ENCODE measurements at regions of chr13 and their contacts with region 1.

Region 1: DNA sequence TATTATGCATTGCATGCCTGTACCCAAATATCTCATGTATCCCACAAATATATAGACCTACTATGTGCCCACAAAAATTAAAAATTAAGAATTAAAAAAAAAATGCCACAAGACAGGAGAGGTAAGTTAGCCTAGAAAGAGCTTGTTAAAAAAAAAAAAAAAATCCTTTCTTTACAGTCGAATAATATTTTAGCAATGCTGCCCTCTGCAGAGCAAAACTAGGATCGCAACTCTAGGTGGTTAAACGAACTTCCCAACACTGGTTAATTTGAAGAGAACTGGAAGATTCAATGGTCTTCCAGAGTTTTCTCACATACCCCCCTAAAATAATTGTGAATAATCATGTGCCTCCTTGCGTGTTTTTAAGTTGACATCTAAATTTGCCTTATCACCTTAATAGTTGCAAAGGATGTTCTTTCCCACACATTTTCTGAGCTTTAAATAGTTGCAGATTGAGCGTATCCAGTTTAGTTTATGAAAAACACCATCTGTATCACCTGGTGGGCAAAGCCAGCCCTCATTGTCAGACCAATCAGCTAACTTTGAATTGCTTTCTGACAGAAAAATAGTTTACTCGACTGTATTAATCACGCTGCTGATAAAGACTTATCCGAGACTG is 47.4 kb upstream of the RCBTB2 start:
- DNase-seq: peak; percentile 78
- H3K4me3 ChIP-seq: no peak overlapping the region
- H3K27ac ChIP-seq: no peak overlapping the region
- H3K4me1 ChIP-seq: peaks cover 39% of the 10 kb centered on the region
- CTCF ChIP-seq: peak; percentile 97

Region 2: DNA sequence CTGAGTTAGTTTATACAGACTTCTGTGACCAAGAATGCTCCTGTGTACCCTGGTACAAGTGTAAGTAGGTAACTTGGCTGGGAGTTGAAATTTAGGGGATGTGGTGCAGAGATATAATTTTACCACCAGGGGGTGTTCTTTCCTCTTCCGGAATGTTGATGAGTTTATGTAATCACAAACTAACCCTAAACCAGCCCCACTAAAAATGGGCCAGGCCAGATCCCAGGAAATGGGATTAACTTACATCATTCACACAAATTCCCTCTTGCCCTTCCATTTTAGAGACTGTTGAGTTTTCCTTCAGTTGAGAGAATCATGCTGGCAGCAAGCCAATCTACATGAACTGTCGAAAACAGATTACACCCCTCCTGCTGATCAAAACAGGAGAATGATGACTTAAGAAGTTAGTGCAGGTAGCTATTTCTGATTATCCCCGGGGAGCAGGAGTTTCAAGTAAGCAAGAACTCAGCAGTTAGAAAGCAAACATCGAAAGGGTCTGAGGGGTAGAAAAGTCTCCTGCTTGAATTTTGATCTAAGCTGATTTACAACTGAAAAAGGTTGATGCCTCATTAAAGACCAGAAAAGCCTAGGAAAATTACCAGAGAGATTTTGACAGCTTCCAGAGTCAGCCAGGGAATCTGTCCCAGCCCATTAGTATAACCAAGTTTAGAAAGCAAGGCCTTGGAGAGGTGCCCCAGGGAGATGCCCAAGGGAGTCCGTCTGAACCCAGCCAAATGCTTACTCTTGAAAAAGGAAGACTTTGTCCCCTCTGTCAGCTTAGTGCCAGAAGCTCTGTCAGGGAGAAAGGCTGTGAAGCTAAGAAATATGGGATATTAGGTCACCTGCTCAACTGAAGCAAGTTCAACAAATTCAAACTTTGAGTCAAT is 453.1 kb before region 1 on chr13:
- CTCF ChIA-PET with region 1: interaction called, 4 read pairs
- POLR2A ChIA-PET with region 1: interaction called, 5 read pairs
- intact Hi-C with region 1: loop called (anchors 1 kb)
- DNase-seq: peak; percentile 72
- H3K4me3 ChIP-seq: no peak overlapping the region
- H3K27ac ChIP-seq: no peak overlapping the region
- H3K4me1 ChIP-seq: peaks cover 4% of the 10 kb centered on the region
- CTCF ChIP-seq: peak; percentile 96

Region 3: GRCh38 chr13:48303359-48304142 is 276.7 kb before region 1 on chr13 and contains the start of gene RB1:
- CTCF ChIA-PET with region 1: no interaction called
- POLR2A ChIA-PET with region 1: no interaction called
- intact Hi-C with region 1: loop called (anchors 1 kb)
- DNase-seq: peak; percentile 92
- H3K4me3 ChIP-seq: peak within 1 kb of the TSS; percentile 93
- H3K27ac ChIP-seq: peak within 1 kb of the TSS; percentile 94
- H3K4me1 ChIP-seq: peaks cover 28% of the 10 kb centered on the region
- CTCF ChIP-seq: no peak
- total RNA-seq, gene RB1: 31.7 and 33.5 TPM in 2 replicates

Region 4: DNA sequence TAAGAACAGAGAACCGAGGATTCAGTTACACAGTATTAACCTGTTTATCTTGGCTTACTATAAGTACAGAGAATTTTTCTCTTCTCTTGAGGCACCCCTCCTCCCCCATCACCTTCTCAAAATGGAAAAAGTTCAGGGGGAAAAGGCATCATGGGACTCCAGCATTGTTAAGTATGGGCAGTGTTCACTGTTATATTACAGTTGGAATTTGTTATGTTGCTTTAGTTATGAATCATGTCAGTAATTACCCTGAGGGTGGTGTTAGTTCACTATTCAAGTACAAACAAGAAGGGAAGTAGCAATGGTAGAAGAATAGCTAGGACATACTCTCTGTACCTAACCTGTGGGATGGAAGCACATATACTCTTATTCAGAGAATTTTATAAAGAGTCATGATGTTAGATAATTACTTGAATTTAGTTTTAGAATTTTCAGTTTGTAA is 179.4 kb before region 1 on chr13:
- CTCF ChIA-PET with region 1: no interaction called
- POLR2A ChIA-PET with region 1: interaction called, 5 read pairs
- intact Hi-C with region 1: loop called (anchors 1 kb)
- DNase-seq: peak; percentile 14
- H3K4me3 ChIP-seq: no peak overlapping the region
- H3K27ac ChIP-seq: no peak overlapping the region
- H3K4me1 ChIP-seq: peaks cover 20% of the 10 kb centered on the region
- CTCF ChIP-seq: peak; percentile 43; the same call in 1 of the 2 replicates

Region 5: DNA sequence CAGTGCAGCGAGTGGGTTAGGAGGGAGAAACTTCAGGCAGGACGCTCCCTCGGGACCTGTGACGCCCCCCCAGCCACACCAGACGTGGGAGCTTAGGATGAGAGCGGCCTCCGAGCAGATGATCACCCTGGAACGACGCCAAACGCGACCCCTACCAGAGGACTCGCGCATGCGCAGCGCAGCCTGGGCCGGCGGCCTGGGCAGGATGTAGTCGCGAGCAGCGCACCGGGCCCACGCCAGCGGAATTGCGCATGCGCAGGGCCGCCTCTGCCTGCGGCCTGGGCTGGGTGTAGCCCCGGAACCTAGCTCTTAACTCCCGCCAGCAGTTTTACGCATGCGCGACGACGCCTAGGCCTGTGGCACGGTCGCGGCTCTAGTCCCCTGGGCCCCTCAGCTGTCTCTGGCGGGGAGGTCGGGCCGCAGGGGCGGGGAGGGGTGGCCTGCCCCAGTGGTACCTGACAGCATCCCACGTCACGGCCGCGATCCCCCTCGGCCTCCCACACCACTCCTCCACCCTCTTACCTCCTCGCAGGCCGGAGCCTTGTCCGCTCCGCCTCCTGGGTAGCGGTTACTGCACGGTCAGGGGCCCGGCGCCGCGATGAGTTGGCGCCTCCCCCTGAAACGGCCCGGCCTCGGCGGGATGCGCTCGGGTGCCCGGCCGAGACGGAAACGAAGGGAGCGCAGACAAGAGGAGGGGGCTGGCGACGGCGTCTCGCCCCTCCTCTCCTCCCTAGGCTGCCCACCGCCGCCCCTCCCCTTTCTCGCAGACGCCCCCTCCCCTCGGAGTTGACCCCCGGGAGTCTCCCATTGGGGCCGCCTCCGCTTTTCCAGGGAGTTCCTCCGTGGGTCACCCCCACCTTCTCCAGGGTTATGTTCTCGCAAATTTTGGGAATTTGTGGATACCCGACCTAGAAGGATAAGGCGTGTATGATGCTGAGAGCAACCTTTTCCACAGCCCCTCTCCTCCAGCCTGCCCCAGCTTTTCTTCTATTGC is 47.5 kb before region 1 on chr13 and contains the start of gene RCBTB2:
- CTCF ChIA-PET with region 1: interaction called, 4 read pairs
- POLR2A ChIA-PET with region 1: interaction called, 10 read pairs
- intact Hi-C with region 1: loop called (anchors 2 kb)
- DNase-seq: peak; percentile 99
- H3K4me3 ChIP-seq: peak within 1 kb of the TSS; percentile 73
- H3K27ac ChIP-seq: peak within 1 kb of the TSS; percentile 80
- H3K4me1 ChIP-seq: peaks cover 59% of the 10 kb centered on the region
- CTCF ChIP-seq: no peak
- total RNA-seq, gene RCBTB2: 4.4 and 9.0 TPM in 2 replicates

Region 6: GRCh38 chr13:49627831-49628652 is 1047.7 kb after region 1 on chr13 and contains the start of gene ARL11:
- CTCF ChIA-PET with region 1: no interaction called
- POLR2A ChIA-PET with region 1: no interaction called
- intact Hi-C with region 1: loop called (anchors 10 kb)
- DNase-seq: peak; percentile 93
- H3K4me3 ChIP-seq: peak within 1 kb of the TSS; percentile 90
- H3K27ac ChIP-seq: peak within 1 kb of the TSS; percentile 72
- H3K4me1 ChIP-seq: peaks cover 34% of the 10 kb centered on the region
- CTCF ChIP-seq: no peak
- total RNA-seq, gene ARL11: 5.9 and 8.3 TPM in 2 replicates